ENCODE measurements at regions of chr3 and their contacts with region 1.

Region 1: DNA sequence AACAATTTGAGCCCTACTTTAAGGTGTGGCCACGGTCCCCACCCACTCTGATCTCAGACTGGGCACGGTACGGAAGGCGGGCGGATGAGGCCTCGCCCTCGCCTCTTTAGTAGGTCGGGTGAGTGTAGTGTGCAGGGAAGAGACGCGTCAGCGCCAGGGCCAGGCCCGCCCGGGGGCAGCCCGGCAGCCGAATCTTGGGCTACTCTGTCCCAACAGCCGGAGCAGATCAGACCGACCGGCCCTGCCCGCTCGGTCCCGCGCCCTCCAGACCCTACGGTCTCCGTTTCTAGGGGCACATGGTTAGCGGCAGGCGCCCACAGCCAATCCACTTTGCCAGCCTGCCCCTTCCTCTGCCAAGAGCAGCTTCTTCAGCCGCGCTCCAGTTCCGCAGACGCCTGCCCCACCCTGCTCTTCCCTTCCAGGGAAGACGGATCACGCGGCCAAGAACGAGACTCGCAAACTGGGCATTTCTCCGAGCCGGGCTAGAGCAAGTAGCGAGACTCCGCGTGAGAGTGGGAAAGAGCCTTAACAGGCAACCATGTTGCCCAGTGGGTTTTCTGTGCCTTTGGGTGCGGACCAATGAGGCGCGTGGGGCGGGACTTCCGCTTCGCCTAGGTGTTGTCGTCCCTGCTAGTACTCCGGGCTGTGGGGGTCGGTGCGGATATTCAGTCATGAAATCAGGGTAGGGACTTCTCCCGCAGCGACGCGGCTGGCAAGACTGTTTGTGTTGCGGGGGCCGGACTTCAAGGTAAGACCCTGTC is at the start of gene RNF13:
- DNase-seq: peak; percentile 92
- H3K4me3 Mint-ChIP-seq: peak within 1 kb of the TSS; percentile 97
- H3K27ac Mint-ChIP-seq: peak within 1 kb of the TSS; percentile 99
- H3K4me1 Mint-ChIP-seq: peaks cover 48% of the 10 kb centered on the region
- H3K27me3 Mint-ChIP-seq: peaks cover 9% of the 10 kb centered on the region
- total RNA-seq, gene RNF13: 37.2 to 42.4 TPM

Region 2: GRCh38 chr3:149572796-149573414 is 239.9 kb before region 1 on chr3:
- CTCF ChIA-PET with region 1: interaction called, 15 read pairs
- POLR2A ChIA-PET with region 1: no interaction called
- DNase-seq: no peak
- H3K4me3 Mint-ChIP-seq: no peak overlapping the region
- H3K27ac Mint-ChIP-seq: no peak overlapping the region
- H3K4me1 Mint-ChIP-seq: peaks cover 31% of the 10 kb centered on the region
- H3K27me3 Mint-ChIP-seq: peaks cover under 1% of the 10 kb centered on the region

Region 3: DNA sequence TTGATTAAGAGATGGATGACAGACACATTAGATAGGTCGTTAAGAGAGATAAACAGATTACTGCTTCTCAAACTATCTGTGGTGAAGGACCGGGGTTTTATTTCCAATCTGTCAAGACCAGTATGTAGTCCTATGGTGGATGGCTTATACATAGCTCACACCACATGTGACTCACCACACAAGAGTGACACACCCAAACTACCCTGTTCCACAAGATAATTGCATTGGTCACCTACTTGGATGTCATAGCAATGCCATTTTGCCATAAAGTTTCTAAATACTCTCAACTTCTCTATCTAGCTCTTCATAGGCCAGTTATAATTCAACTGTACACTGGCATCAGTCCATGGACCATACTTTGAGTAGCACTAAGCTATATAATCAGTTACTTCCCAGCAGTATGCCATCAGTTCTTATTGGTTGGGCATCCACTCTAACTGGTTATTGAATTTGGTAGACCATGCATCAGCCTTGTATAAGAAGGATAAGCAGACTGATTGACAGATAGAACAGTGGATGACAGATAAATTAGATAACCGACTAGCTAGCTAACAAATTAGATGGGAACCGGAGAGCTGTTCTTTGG is 166.5 kb before region 1 on chr3:
- CTCF ChIA-PET with region 1: no interaction called
- POLR2A ChIA-PET with region 1: no interaction called
- DNase-seq: no peak
- H3K4me3 Mint-ChIP-seq: no peak overlapping the region
- H3K27ac Mint-ChIP-seq: no peak overlapping the region
- H3K4me1 Mint-ChIP-seq: no peaks in the 10 kb centered on the region
- H3K27me3 Mint-ChIP-seq: peaks cover 7% of the 10 kb centered on the region

Region 4: GRCh38 chr3:149765762-149766334 is 46.9 kb before region 1 on chr3:
- CTCF ChIA-PET with region 1: interaction called, 28 read pairs
- POLR2A ChIA-PET with region 1: no interaction called
- DNase-seq: no peak
- H3K4me3 Mint-ChIP-seq: no peak overlapping the region
- H3K27ac Mint-ChIP-seq: no peak overlapping the region
- H3K4me1 Mint-ChIP-seq: no peaks in the 10 kb centered on the region
- H3K27me3 Mint-ChIP-seq: peaks cover 32% of the 10 kb centered on the region

Region 5: DNA sequence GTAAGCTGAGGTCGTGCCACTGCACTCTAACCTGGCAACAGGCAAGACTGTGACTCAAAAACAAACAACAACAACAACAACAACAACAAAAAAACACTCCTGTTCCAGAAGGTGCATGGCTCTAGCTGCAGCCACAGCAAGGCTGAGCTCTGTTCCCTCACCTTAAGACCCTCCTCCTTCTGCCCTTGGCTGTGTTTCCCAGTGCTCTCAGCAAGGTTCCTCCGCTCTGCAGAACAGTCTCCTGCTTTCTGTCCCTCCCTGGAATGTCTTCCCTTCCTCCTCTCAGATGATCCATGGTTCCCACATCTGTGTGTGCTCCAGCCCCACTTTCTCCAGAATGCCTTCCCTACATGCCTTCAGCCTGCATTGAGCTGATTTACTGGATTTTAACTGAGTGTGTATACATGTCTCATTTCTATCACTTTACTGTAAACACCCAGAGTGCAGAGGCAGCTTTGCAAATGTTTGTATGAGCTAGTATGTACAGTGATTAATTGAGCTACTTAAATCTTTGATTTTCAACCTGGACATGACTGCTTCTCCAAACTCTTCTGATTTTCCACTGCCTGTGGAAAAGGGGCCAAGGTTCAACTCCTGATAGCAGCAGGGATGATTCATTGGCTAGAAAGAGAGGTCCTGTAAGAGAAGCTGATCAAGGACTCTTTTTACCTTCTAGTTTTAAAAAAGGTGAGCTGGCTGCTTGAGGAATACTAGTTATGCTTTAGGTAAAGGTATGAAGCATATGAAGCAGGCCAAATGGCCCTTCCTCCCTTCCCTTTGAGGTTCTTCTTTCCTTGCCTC is 35.2 kb before region 1 on chr3:
- CTCF ChIA-PET with region 1: interaction called, 12 read pairs
- POLR2A ChIA-PET with region 1: no interaction called
- DNase-seq: no peak
- H3K4me3 Mint-ChIP-seq: no peak overlapping the region
- H3K27ac Mint-ChIP-seq: no peak overlapping the region
- H3K4me1 Mint-ChIP-seq: no peaks in the 10 kb centered on the region
- H3K27me3 Mint-ChIP-seq: peaks cover 4% of the 10 kb centered on the region

Region 6: DNA sequence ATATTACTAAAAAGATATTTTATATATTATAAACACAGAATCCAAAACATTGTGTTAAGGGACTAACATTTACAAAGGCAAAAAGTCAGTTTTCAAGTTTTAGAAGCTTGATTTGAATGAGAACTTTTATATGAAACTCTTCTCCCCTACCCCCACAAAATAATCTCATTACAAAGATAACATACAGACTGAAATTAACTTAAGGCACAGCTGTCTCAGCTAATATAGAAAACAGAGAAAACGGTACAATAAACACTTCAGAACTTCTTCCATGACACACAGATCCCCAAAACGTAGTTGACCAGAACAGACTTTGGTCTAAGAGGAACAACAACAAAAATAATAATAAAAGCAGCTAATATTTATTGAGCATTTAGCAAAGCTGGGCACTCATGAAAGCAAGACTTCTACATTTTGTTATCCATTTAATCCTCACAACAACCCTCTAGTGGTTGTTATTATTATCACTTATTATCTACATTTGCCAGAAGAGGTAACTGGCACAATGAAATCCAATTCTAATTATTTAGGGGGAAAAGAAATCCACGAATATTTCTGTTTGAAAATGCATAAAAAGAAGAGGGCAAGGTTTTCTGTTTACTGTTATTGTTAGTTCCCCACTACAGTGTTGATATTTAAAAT is 89.8 kb after region 1 on chr3:
- CTCF ChIA-PET with region 1: no interaction called
- POLR2A ChIA-PET with region 1: no interaction called
- DNase-seq: no peak
- H3K4me3 Mint-ChIP-seq: no peak overlapping the region
- H3K27ac Mint-ChIP-seq: no peak overlapping the region
- H3K4me1 Mint-ChIP-seq: no peaks in the 10 kb centered on the region
- H3K27me3 Mint-ChIP-seq: no peaks in the 10 kb centered on the region

Measured in activated CD4-positive, alpha-beta memory T cell treated with anti-CD3 and anti-CD28 coated beads, Interleukin-2, amount 10 ng/mL, durations not matched to agents 7 days and 5 days (primary cell).